Activated naive CD4-positive, alpha-beta T cell treated with anti-CD3 and anti-CD28 coated beads for 36 hours (primary cell): ENCODE measurements at regions of chr7 and their contacts with region 1.

Region 1: DNA sequence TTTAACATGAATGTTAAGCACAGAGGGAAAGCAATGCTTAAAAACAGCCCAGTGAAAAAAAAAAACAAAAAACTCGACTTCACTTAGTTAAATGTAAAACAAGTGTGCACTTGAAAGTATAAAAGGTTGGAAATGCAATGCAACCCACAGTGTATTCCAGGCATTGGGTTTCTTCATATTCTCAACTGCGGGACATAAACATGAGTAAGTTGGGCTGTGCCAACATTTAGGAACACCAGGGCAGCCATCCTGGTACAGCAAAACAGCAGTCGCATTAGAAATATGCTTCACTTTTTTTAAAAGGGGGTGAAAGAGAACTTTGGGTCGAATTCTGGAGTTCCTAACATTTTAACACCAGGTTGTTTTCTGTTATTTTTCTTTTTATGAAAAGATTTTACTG is 937 bp downstream of the STEAP1 start:
- DNase-seq: no peak
- H3K4me3 Mint-ChIP-seq: no peak overlapping the region
- H3K27ac Mint-ChIP-seq: no peak overlapping the region
- H3K4me1 Mint-ChIP-seq: peaks cover 3% of the 10 kb centered on the region
- H3K27me3 Mint-ChIP-seq: peaks cover 23% of the 10 kb centered on the region

Region 2: GRCh38 chr7:89593125-89593524 is 562.1 kb before region 1 on chr7:
- CTCF ChIA-PET with region 1: no interaction called
- intact Hi-C with region 1: no loop called
- DNase-seq: no peak
- H3K4me3 Mint-ChIP-seq: no peak overlapping the region
- H3K27ac Mint-ChIP-seq: no peak overlapping the region
- H3K4me1 Mint-ChIP-seq: no peaks in the 10 kb centered on the region
- H3K27me3 Mint-ChIP-seq: no peaks in the 10 kb centered on the region

Region 3: GRCh38 chr7:90178679-90179278 is 23.6 kb after region 1 on chr7:
- CTCF ChIA-PET with region 1: interaction called, 3 read pairs
- intact Hi-C with region 1: loop called (anchors 1 kb)
- DNase-seq: peak; percentile 63
- H3K4me3 Mint-ChIP-seq: peak overlapping the region; percentile 17
- H3K27ac Mint-ChIP-seq: peak overlapping the region; percentile 94
- H3K4me1 Mint-ChIP-seq: peaks cover 35% of the 10 kb centered on the region
- H3K27me3 Mint-ChIP-seq: peaks cover 8% of the 10 kb centered on the region

Region 4: GRCh38 chr7:90211391-90212148 is 56.4 kb after region 1 on chr7 and contains the start of gene STEAP2:
- CTCF ChIA-PET with region 1: interaction called, 9 read pairs
- intact Hi-C with region 1: loop called (anchors 1 kb)
- DNase-seq: peak; percentile 51
- H3K4me3 Mint-ChIP-seq: peak within 1 kb of the TSS; percentile 63
- H3K27ac Mint-ChIP-seq: no peak within 1 kb of the TSS
- H3K4me1 Mint-ChIP-seq: peaks cover 7% of the 10 kb centered on the region
- H3K27me3 Mint-ChIP-seq: peaks cover 23% of the 10 kb centered on the region
- total RNA-seq, gene STEAP2: not detected

Region 5: GRCh38 chr7:90244909-90245851 is 90.0 kb after region 1 on chr7 and contains the start of gene CFAP69:
- CTCF ChIA-PET with region 1: interaction called, 5 read pairs
- intact Hi-C with region 1: loop called (anchors 1 kb)
- DNase-seq: peak; percentile 91
- H3K4me3 Mint-ChIP-seq: peak within 1 kb of the TSS; percentile 97
- H3K27ac Mint-ChIP-seq: no peak within 1 kb of the TSS
- H3K4me1 Mint-ChIP-seq: peaks cover 17% of the 10 kb centered on the region
- H3K27me3 Mint-ChIP-seq: peaks cover 24% of the 10 kb centered on the region
- total RNA-seq, gene CFAP69: 0.25 to 0.31 TPM

Region 6: GRCh38 chr7:90262438-90262837 is 107.2 kb after region 1 on chr7:
- CTCF ChIA-PET with region 1: interaction called, 21 read pairs
- intact Hi-C with region 1: loop called (anchors 1 kb)
- DNase-seq: no peak
- H3K4me3 Mint-ChIP-seq: no peak overlapping the region
- H3K27ac Mint-ChIP-seq: no peak overlapping the region
- H3K4me1 Mint-ChIP-seq: no peaks in the 10 kb centered on the region
- H3K27me3 Mint-ChIP-seq: peaks cover 3% of the 10 kb centered on the region

Region 7: DNA sequence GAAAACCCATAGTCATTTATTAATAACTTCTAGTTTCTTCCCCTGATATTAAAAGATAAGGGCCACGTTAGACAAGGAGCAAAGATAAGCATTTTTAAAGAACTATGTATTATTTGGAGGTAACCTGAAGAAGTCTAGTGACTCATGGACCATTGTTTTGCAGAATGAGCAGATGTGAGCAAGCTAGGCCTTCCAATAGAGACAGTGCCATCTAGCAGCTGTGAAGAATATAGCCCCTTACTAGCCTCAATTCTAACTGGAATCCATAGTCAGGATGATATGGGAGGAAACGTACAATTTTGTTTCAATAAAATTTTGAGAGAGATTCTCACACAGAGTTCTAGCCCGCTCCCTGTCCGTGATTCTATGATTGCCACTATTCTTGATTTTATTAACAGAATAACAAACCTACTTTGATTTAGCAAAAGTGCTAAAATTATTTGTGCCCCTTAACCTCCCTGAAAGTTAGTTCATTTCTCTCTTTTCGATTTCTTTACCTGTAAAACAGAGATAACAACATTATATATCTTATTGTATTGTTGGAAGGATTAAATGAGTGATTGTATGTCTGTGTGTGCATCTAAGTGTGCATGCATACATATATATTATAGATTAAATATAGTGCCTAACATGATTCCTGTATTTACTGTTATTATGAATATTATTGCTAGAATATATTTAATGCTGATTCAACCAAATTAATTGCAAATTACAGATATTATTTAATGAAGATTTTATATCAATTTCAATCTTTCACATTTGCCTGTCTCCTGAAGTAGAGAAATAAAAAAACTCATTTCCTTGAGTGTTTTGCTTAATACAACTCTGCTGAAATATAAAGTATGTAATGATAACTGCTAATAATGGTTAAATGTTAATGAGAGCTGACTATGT is 143.2 kb after region 1 on chr7:
- CTCF ChIA-PET with region 1: no interaction called
- intact Hi-C with region 1: loop called (anchors 1 kb)
- DNase-seq: no peak
- H3K4me3 Mint-ChIP-seq: no peak overlapping the region
- H3K27ac Mint-ChIP-seq: no peak overlapping the region
- H3K4me1 Mint-ChIP-seq: no peaks in the 10 kb centered on the region
- H3K27me3 Mint-ChIP-seq: peaks cover 2% of the 10 kb centered on the region

Region 8: DNA sequence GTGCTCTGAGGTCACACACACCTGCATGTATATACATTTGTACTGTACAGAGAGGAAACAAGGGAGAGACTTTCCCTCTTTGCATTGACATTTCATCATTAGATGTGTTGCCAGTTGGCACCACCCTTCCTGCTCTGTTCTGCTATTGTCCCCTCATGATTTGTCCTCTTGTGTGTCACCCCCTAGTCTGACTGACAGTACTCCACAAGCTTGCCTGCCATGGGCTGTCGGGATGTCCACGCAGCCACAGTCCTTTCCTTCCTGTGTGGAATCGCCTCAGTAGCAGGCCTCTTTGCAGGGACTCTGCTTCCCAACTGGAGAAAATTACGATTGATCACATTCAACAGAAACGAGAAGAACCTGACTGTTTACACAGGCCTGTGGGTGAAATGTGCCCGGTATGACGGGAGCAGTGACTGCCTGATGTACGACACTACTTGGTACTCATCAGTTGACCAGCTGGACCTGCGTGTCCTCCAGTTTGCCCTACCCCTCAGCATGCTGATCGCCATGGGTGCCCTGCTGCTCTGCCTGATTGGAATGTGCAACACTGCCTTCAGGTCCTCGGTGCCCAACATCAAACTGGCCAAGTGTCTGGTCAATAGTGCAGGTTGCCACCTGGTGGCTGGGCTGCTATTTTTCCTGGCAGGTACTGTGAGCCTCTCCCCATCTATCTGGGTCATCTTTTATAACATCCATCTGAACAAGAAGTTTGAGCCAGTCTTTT is 257.4 kb after region 1 on chr7:
- CTCF ChIA-PET with region 1: no interaction called
- intact Hi-C with region 1: no loop called
- DNase-seq: peak; percentile 46
- H3K4me3 Mint-ChIP-seq: no peak overlapping the region
- H3K27ac Mint-ChIP-seq: no peak overlapping the region
- H3K4me1 Mint-ChIP-seq: no peaks in the 10 kb centered on the region
- H3K27me3 Mint-ChIP-seq: no peaks in the 10 kb centered on the region

Region 9: DNA sequence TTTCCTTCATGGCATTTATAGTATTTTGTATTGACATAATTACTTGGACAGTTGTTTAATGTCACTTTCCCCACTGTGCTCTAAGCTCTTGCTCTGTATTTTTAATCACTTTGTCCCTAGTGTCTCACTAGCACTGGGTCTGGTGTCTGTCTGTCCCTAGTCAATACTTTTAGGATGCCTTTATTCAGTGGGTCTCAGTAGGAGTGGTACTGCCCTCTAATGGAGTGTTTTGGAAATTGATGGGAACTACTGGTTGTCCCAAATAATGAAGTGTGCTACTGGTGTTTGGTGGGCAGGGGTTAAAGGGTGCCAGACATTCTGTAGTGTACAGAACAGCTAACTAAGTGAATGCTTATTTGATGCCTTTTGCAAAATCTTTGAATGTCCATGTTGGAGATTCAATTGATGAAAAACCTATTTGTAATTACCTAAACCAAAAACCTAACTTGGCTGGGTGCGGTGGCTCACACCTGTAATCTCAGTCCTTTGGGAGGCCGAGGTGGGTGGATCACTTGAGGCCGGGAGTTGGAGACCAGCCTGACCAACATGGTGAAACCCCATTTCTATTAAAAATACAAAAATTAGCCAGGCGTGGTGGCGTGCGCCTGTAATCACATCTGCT is 474.2 kb after region 1 on chr7:
- CTCF ChIA-PET with region 1: no interaction called
- intact Hi-C with region 1: loop called (anchors 5 kb)
- DNase-seq: peak; percentile 12
- H3K4me3 Mint-ChIP-seq: no peak overlapping the region
- H3K27ac Mint-ChIP-seq: no peak overlapping the region
- H3K4me1 Mint-ChIP-seq: no peaks in the 10 kb centered on the region
- H3K27me3 Mint-ChIP-seq: peaks cover 4% of the 10 kb centered on the region